ENCODE measurements at regions of chr1 and their contacts with region 1.

Region 1: DNA sequence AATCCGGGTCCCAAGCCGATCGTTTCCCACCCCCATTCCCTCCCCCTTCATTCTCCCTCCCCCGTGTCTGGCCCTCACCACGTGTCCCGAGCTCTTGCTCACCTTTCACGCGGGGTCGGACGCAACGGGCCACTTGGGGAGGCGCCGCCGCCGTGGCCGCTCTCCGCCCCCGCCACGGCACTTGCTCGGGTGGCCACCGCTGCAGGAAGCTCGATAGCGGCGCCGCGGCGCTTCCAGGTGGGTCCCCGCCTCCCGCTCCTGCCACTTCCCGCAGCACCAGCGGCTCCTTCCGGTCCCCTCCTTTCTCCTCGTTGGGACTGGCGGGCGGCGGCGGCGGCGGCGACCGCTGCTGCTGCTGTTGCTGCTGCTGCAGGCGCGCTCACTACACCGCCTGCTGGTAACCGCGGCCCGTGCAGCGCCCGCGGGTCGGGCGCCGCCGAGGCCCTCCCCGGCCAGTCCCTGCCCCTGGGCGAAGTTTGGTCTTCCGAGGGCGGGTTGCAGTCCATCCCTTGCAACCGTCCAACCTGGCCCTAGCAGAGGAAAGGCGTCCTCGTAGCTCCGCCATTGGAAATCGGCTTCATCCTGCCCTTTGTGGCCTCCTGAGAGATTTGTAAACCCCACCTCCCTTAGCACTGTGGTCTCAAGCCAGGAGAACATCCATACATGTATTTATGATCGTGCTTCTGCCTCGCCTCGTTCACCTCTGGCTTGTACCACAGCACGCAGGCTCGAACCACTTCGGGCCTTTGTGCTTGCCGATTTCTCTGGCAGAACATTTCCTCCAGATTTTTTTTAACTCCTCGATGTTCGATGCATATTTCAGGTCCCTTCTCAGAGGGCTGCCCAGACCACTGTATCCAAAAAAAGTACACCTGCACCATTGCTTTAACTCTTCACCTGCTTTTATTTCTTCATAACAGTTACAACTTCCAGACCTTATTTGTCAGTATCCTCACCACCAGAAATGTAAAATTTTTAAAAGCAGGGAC is 996 bp upstream of the ZZZ3 start:
- DNase-seq: peak; percentile 76 to 98 (median 93)

Region 2: DNA sequence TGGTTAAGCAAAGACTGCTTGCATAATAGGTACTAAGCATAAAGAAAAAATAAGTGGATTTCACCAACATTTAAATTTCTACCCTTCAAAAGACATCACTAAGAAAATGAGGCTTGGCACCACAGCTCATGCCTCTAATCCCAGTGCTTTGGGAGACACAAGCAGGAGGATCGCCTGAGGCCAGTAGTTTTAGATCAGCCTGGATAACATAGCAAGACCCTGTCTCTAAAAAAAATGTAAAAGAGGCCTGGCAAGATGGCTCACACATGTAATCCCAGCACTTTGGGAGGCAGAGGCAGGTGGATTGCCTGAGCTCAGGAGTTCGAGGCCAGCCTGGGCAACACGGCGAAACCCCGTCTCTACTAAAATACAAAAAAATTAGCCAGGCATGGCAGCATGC is 537.2 kb before region 1 on chr1:
- intact Hi-C with region 1: loop called (anchors 5 kb)
- DNase-seq: no peak

Region 3: DNA sequence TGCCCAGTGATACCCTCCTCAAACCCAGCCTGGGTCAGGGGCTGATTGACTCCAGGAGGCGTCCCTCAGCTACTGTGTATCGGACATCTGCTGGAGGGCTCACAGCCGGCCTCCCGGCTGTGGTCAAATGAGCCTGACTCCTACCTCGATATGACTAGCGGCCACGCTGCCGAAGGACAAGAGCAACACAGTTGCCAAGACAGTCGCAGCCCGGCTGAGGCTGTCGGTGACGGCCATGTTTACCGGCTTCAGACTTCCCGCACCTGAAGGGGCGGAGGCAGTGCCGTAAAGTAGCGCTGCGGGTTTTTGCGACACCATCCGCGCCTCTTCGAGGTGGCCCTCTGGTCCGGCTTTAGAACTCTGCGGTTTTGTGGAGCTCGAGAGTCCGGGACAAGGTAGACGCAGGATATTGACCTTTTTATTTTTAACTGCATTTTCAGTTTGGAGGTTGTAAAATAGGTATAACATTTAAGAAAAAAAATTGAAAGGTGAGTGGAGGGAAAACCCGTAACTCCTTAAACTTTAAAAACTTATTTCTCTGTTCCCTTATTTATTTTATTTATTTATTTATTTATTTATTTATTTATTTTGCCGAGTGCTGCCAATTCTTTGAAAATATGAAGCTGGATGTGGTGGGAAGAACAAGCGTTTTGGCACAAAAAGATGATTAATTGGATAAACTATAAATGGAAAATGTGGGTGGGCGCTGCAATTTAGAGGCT is 464.1 kb before region 1 on chr1 and contains the start of gene PIGK:
- intact Hi-C with region 1: loop called (anchors 5 kb)
- DNase-seq: peak; percentile 74 to 94 (median 88)

Region 4: GRCh38 chr1:77281491-77282186 is 401.8 kb before region 1 on chr1 and contains the start of gene AK5:
- intact Hi-C with region 1: loop called (anchors 5 kb)
- DNase-seq: peak; percentile 6 to 86 (median 74)

Region 5: DNA sequence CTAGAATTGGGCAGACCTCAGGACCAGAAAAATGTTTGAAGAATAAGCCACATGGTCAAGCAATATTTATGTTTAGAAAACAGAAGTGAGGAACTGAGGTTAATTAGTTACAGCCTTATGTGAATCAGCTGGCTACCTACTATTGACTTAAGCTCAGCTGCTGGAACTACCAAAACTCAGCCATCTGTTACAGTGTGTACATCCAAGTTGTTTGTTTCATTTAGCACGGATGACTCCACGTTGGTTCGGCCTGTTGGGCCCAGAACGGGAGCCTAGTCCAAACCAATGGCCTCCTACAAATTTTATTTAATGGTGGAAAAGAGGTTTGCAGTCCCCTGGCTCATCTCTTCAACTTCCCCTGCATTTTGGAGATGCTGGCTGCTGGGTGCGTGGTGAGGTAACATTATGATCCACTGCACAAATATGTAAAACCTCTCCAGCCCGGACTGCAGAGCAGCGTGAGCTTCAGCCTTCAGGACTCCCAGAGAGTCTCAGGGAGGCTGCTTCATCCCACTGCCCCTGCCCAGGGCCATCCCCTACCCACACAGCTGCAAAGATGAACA is 144.4 kb before region 1 on chr1:
- intact Hi-C with region 1: loop called (anchors 5 kb)
- DNase-seq: no peak